GM12878 (cell line): ENCODE measurements at regions of chr14 and their contacts with region 1.

Region 1: DNA sequence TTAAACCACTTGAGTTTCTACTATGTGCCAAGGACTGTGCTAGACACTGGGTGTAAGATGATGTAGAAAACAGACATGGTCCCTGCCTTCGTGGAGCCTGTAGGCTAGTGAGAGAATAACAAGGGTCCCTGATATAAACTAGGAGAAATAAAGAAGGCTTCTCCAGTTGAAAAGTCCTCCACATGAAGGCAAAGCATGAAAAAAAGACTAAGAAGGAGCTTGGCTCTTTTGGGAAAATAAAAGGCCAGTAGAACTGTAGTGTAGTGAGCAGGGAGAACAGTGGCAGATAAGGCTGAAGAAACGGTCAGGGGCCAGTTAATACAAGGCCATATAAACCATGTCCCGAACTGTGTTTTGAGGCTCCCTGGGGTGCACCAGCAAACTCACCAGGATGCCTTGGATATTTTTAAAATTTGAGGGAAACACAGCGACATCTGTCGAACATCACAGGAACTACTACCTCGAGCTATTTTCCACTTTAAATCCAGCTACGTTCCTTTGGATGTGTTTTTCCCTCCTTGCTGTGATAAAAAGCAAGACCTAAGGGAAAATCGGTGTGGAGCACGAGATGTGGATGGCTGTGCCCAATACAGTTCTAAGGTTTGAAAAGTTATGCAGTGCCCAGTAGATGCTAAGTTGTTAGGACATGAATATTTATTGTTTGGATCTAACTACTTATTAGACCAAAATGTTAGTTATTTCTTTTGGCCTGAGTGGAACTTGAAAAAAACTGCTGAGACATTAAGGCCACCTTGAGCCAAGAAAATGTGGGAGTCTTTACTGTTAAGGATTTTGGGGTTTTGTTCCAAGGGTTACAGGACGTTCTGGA is 8.5 kb upstream of the CFL2 start:
- DNase-seq: no peak
- ATAC-seq: peak; percentile 74
- H3K4me3 ChIP-seq: no peak overlapping the region
- H3K27ac ChIP-seq: no peak overlapping the region
- H3K4me1 ChIP-seq: no peaks in the 10 kb centered on the region
- H3K27me3 ChIP-seq: no peaks in the 10 kb centered on the region
- CTCF ChIP-seq: peak; percentile 67 to 78 (median 74)
- EP300 ChIP-seq: no peak
- POLR2A ChIP-seq: no peak
- RAD21 ChIP-seq: peak; percentile 66

Region 2: GRCh38 chr14:34662561-34663088 is 60.3 kb before region 1 on chr14:
- CTCF ChIA-PET with region 1: interaction called, 12 read pairs
- POLR2A ChIA-PET with region 1: no interaction called
- RAD21 ChIA-PET with region 1: interaction called, 3 read pairs
- SMC1A ChIA-PET with region 1: interaction called, 4 read pairs
- in situ Hi-C with region 1: no loop called
- intact Hi-C with region 1: no loop called
- DNase-seq: no peak
- ATAC-seq: no peak
- H3K4me3 ChIP-seq: no peak overlapping the region
- H3K27ac ChIP-seq: no peak overlapping the region
- H3K4me1 ChIP-seq: no peaks in the 10 kb centered on the region
- H3K27me3 ChIP-seq: no peaks in the 10 kb centered on the region
- CTCF ChIP-seq: no peak
- EP300 ChIP-seq: no peak
- POLR2A ChIP-seq: no peak
- RAD21 ChIP-seq: no peak

Region 3: GRCh38 chr14:34671716-34672115 is 51.2 kb before region 1 on chr14:
- CTCF ChIA-PET with region 1: interaction called, 145 read pairs
- POLR2A ChIA-PET with region 1: interaction called, 5 read pairs
- RAD21 ChIA-PET with region 1: interaction called, 72 read pairs
- SMC1A ChIA-PET with region 1: interaction called, 82 read pairs
- in situ Hi-C with region 1: loop called (anchors 5 kb)
- intact Hi-C with region 1: loop called (anchors 1 kb)
- DNase-seq: no peak
- ATAC-seq: no peak
- H3K4me3 ChIP-seq: no peak overlapping the region
- H3K27ac ChIP-seq: no peak overlapping the region
- H3K4me1 ChIP-seq: no peaks in the 10 kb centered on the region
- H3K27me3 ChIP-seq: no peaks in the 10 kb centered on the region
- CTCF ChIP-seq: no peak
- EP300 ChIP-seq: no peak
- POLR2A ChIP-seq: no peak
- RAD21 ChIP-seq: no peak

Region 4: DNA sequence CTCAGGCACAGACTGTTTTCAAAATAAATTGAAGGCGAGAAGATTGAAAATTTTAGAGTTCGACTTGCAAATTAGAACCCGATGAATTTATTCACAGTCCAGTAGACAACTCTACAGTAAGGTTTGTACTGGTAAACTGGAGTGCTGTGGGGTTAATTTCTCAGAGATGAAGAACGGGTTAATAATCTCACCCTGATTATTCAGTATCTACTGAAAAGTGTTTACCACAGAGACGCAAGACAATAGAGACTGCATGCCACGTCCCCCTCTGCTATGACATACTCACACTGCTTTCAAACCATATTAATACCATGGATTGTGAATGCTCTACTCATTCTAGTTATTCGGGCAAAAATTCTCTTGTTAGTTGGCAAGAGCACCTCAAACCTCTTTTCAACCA is 44.6 kb before region 1 on chr14:
- CTCF ChIA-PET with region 1: interaction called, 145 read pairs
- POLR2A ChIA-PET with region 1: no interaction called
- RAD21 ChIA-PET with region 1: interaction called, 72 read pairs
- SMC1A ChIA-PET with region 1: interaction called, 82 read pairs
- in situ Hi-C with region 1: loop called (anchors 5 kb)
- intact Hi-C with region 1: no loop called
- DNase-seq: no peak
- ATAC-seq: no peak
- H3K4me3 ChIP-seq: no peak overlapping the region
- H3K27ac ChIP-seq: no peak overlapping the region
- H3K4me1 ChIP-seq: no peaks in the 10 kb centered on the region
- H3K27me3 ChIP-seq: no peaks in the 10 kb centered on the region
- CTCF ChIP-seq: no peak
- EP300 ChIP-seq: no peak
- POLR2A ChIP-seq: no peak
- RAD21 ChIP-seq: no peak

Region 5: GRCh38 chr14:34693228-34693939 is 29.5 kb before region 1 on chr14:
- CTCF ChIA-PET with region 1: interaction called, 14 read pairs
- POLR2A ChIA-PET with region 1: no interaction called
- RAD21 ChIA-PET with region 1: interaction called, 6 read pairs
- SMC1A ChIA-PET with region 1: interaction called, 11 read pairs
- in situ Hi-C with region 1: no loop called
- intact Hi-C with region 1: no loop called
- DNase-seq: no peak
- ATAC-seq: no peak
- H3K4me3 ChIP-seq: no peak overlapping the region
- H3K27ac ChIP-seq: no peak overlapping the region
- H3K4me1 ChIP-seq: no peaks in the 10 kb centered on the region
- H3K27me3 ChIP-seq: no peaks in the 10 kb centered on the region
- CTCF ChIP-seq: no peak
- EP300 ChIP-seq: no peak
- POLR2A ChIP-seq: no peak
- RAD21 ChIP-seq: no peak

Region 6: DNA sequence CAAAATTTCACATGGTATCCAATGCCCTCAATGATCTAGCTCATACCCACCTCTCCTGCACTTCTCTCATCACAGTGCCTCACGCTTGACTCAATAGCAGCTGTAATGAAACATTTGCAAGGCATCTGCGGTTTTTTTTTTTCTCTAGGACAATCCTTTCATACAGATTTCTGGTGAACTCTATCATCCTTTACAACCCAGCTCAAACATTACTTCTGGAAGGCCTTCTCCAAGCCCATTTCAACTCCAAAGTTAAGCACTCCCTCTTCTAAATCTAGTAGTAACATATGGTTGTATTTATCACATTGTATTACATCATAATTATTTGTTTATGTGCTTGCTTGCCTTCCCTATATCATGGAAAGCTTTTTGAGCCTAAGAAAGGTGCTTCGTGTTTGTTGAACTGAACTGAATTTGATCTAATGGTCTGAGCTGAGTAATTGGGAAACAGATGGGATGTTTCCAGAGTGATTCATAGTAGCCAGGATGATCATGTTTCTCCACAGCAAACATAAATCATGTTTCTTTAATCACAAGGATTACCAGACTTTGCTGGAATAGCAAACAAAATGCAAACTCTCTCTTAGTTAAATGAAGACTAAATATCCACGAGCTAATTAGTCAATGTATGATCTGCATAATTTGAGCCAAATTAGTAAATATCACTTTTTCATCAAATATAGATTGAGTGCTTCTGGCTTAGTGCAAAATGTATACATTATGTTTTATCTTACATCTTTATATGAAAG is 22.9 kb before region 1 on chr14:
- CTCF ChIA-PET with region 1: interaction called, 17 read pairs
- POLR2A ChIA-PET with region 1: no interaction called
- RAD21 ChIA-PET with region 1: interaction called, 10 read pairs
- SMC1A ChIA-PET with region 1: interaction called, 4 read pairs
- in situ Hi-C with region 1: no loop called
- intact Hi-C with region 1: no loop called
- DNase-seq: no peak
- ATAC-seq: no peak
- H3K4me3 ChIP-seq: no peak overlapping the region
- H3K27ac ChIP-seq: no peak overlapping the region
- H3K4me1 ChIP-seq: no peaks in the 10 kb centered on the region
- H3K27me3 ChIP-seq: no peaks in the 10 kb centered on the region
- CTCF ChIP-seq: no peak
- EP300 ChIP-seq: no peak
- POLR2A ChIP-seq: no peak
- RAD21 ChIP-seq: no peak

Region 7: DNA sequence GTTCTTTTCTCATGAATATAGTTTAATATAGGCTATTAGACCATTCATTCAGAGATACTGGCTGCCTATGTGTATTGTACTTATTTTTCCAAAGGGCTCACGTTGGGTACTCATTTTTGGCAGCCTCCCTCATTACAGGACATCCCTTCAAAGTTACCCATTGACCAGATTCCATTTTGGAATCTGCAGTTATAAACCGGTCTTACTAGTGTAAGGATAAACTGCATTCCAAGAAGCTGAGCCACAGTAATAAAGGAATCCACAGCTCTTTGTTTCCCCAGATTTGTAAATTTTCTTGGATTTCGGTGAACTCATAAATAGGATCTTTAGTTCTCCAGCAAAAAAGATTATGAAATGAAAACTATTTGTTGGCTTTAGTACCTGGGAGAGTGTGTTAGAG is 10.3 kb after region 1 on chr14:
- CTCF ChIA-PET with region 1: interaction called, 23 read pairs
- POLR2A ChIA-PET with region 1: no interaction called
- RAD21 ChIA-PET with region 1: interaction called, 7 read pairs
- SMC1A ChIA-PET with region 1: interaction called, 6 read pairs
- in situ Hi-C with region 1: no loop called
- intact Hi-C with region 1: no loop called
- DNase-seq: no peak
- ATAC-seq: no peak
- H3K4me3 ChIP-seq: no peak overlapping the region
- H3K27ac ChIP-seq: no peak overlapping the region
- H3K4me1 ChIP-seq: no peaks in the 10 kb centered on the region
- H3K27me3 ChIP-seq: no peaks in the 10 kb centered on the region
- CTCF ChIP-seq: no peak
- EP300 ChIP-seq: no peak
- POLR2A ChIP-seq: no peak
- RAD21 ChIP-seq: no peak